ENCODE measurements at regions of chr2 and their contacts with region 1.

Region 1: DNA sequence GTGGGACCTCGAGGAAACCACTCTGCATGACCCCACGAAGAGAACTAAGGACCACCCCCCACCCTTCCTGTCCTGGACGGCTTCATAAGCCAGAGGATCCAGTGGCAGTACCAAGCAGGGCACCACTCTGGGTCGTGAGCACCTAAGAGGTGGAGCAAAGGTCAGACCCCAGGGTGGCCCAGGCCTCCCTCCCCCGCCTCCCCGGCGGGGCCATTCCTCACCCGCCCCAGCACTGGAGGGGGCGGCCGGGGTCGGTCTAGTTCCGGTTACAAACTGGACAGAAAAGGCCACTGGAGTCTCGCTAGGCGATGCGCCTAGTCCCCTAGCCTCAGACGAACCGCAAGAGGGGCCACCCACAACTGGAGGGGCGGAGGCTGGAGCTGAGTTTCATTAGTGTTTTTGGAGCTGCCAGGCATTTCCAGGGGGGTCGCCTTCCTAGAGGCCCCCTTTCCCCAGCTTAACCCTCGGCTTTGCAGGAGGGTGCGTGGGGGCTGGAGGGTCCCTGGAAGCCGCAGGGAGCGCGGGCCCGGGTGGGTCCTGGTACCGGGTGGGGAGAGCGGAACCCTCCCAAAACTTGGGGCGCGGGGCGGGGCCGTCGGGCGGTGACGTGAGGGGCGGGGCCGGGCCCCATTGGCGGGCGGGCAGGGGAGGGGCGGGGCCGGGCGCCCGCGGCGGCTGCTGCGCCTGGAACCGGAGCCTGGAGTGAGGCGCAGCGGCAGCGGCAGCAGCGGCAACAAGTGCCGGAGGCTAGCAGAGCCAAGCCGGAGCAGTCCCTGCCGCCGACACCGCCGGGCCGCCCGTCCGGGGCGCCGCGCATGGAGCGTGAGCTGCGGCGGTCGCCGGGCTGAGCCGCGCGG is at the start of gene B3GNT2:
- DNase-seq: peak in 1 of 2 donors; percentile 88
- H3K4me3 ChIP-seq: peak within 1 kb of the TSS; percentile 90 to 97
- H3K27ac ChIP-seq: peak within 1 kb of the TSS; percentile 90 to 91
- H3K4me1 ChIP-seq: peaks cover 0 to 21% of the 10 kb centered on the region in 2 donors
- H3K27me3 ChIP-seq: no peaks in the 10 kb centered on the region
- CTCF ChIP-seq: no peak
- total RNA-seq, gene B3GNT2: 15.2 TPM

Region 2: GRCh38 chr2:62014102-62014501 is 181.5 kb before region 1 on chr2:
- intact Hi-C with region 1: loop called (anchors 2 kb)
- DNase-seq: peak; percentile 19 to 92
- H3K4me3 ChIP-seq: no peak overlapping the region
- H3K27ac ChIP-seq: peak overlapping the region; percentile 49 to 52
- H3K4me1 ChIP-seq: peaks cover 3 to 4% of the 10 kb centered on the region in 2 donors
- H3K27me3 ChIP-seq: no peaks in the 10 kb centered on the region
- CTCF ChIP-seq: peak in 2 of 3 experiments; percentile 14 to 20

Region 3: DNA sequence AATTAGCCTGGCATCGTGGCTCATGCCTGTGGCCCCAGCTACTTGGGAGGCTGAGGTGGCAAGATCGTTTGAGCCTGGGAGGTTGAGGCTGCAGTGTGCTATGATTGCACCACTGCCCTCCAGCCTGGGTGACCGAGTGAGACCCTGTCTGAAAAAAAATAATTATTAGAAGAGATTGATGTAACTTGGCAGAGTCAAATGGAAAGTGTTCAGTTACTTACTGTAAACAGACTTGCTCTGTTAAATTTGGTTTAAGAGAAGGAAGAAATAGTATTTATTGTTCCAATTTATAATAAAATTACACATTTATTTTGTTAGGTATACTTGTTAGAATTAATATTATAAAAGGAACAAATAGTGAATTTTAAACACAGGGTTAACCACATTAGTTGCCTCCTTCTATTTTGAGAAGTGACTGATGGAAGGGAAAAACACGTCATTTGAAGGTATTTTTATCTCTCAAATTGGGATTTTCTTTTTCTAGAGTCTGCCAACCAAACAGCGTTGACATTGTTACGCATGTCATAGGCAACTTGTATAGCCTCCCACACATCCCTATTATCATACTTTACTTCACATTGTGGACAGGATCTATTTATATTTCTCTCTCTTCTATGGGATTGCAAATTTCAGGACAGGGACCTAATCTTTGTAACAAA is 118.5 kb before region 1 on chr2:
- intact Hi-C with region 1: loop called (anchors 2 kb)
- DNase-seq: no peak
- H3K4me3 ChIP-seq: no peak overlapping the region
- H3K27ac ChIP-seq: peak overlapping the region in 1 of 2 donors; percentile 23
- H3K4me1 ChIP-seq: peaks cover 0 to 7% of the 10 kb centered on the region in 2 donors
- H3K27me3 ChIP-seq: no peaks in the 10 kb centered on the region
- CTCF ChIP-seq: no peak

Region 4: DNA sequence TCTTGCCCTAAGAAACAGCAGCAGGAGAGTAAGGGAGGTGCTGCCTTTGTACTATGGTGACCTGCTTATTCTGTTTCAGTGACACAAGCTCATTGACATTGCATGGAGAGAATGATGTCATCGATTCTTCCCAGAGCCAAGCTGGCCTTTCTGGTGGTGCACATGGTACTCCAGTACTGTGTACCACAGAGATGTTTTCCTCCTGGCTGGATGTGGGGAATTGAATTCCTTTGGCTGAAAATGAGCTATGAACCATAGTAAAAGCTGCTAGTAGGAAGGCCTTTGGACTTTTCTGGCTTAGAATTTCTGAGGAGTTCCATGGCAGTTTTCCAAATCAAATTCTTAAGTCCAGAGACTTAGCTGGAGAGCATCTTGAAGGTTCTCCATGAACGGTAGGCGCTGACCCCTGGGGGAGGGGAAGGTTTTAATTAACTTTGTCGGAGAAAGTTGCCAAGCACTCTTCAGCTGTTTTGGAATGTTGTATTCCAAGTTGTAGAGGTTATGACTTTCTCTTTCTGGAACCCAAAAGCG is 16.8 kb before region 1 on chr2:
- intact Hi-C with region 1: loop called (anchors 2 kb)
- DNase-seq: peak in 1 of 2 donors; percentile 74
- H3K4me3 ChIP-seq: no peak overlapping the region
- H3K27ac ChIP-seq: peak overlapping the region; percentile 77 to 79
- H3K4me1 ChIP-seq: peaks cover 0 to 12% of the 10 kb centered on the region in 2 donors
- H3K27me3 ChIP-seq: no peaks in the 10 kb centered on the region
- CTCF ChIP-seq: no peak

Region 5: DNA sequence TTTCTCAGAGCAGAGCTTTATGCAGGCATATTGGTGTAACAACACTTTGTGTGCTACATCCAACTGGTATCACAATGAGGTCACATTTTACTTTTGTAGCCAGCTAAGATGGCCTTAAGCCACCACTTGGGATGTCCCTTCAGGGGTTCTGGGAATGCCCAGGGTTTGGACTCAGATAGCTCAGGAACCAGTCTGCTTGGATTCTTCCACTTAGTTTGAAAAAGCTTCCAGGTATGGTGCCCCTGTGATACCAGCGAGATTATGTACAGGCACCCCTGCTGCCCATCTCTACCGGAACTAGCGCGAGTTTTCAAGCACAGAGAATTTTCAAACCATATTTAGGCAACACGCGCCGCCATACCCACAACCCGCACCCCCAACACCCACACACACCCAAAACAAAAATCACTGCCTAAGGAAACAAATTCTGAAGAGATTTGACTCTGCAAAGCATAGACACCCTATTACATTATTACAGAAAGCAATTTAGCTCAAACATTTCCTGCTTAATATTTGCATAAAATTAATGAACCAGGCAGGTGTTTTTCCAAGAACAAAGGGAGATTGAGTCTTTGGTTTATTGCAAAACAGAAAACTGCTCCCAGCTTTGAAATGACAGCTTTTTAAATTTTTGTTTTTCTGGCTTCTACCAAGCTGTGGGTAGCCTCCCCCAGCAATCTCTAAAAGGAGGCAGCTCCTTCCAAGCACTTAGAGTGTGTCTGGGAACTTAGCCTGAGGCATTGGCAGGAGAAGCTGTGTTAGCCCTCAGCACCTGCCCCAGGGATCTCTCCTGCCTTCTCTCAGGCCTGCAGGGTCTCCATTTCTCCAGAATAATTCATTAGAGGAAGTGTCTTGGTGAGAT is 58.6 kb after region 1 on chr2:
- intact Hi-C with region 1: no loop called
- DNase-seq: no peak
- H3K4me3 ChIP-seq: no peak overlapping the region
- H3K27ac ChIP-seq: no peak overlapping the region
- H3K4me1 ChIP-seq: no peaks in the 10 kb centered on the region
- H3K27me3 ChIP-seq: no peaks in the 10 kb centered on the region
- CTCF ChIP-seq: no peak

Region 6: DNA sequence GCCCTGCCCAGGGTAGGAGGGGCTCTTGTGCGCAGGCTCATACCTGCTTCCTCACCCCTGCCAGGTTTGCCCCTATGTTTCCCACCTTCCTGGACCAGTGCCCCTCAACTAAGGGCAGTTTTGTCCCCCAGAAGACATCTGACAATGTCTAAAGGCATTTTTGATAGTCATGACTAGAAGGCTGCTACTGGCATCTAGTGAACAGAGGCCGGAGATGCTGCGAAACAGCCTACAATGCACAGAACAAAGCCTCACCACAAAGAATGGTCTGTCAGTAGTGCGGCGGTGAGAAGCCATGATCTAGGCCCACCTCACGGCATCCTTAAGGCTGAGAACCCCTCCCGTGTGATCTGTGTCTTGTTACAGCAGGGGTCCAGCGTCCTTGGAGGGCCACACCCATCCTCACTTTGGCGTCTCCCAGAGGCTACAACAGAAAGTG is 214.4 kb after region 1 on chr2:
- intact Hi-C with region 1: loop called (anchors 5 kb)
- DNase-seq: no peak
- H3K4me3 ChIP-seq: no peak overlapping the region
- H3K27ac ChIP-seq: peak overlapping the region; percentile 22 to 90
- H3K4me1 ChIP-seq: peaks cover 0 to 19% of the 10 kb centered on the region in 2 donors
- H3K27me3 ChIP-seq: no peaks in the 10 kb centered on the region
- CTCF ChIP-seq: no peak

Region 7: GRCh38 chr2:62570861-62571698 is 375.4 kb after region 1 on chr2:
- intact Hi-C with region 1: no loop called
- DNase-seq: no peak
- H3K4me3 ChIP-seq: peak overlapping the region; percentile 24
- H3K27ac ChIP-seq: no peak overlapping the region
- H3K4me1 ChIP-seq: no peaks in the 10 kb centered on the region
- H3K27me3 ChIP-seq: no peaks in the 10 kb centered on the region
- CTCF ChIP-seq: no peak

Measured in ascending aorta (tissue), 2 donors.